ENCODE measurements at regions of chr12 and their contacts with region 1.

Region 1: DNA sequence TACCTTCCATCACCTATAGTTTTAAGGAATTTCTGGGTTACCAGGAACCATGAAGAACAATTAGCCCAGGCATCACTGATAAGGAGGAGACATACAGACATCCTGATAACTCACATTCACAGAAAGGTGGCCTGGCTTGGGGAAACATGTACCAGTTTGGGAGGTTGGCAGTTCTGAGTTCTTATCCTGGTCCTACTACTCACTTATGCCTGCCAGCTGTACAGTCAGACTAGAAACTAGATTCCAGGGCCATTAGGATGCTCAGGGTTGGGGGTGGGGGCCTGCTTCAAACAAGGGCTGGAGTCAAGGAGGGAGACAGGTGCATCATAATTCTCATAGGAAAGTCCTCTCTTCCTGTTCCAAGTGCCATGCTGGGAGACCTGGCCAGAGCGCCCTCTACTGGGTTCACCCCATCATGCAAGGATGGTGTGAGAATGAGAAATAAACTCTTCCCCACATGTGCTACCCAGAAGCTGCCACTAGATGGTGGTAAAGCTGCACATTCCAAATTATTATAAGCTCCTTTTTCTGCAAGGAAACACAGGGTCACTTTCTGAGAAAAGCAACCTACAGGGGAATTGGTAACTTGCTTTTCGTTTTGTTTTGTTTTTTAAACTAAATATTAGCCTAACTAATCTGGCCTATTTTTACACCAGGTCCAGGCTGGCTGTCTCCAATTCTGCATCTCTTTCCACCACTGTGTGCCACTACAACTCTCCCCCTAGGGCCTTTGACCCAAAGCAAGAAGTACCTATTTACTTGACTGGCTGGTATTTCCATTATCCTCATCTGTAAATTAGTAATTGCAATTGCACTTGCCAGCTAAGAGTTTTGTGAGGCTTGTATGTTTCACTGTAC is 14.5 kb downstream of the OAS2 start:
- DNase-seq: peak; percentile 70
- ATAC-seq: peak; percentile 45
- H3K4me3 Mint-ChIP-seq: no peak overlapping the region
- H3K27ac Mint-ChIP-seq: no peak overlapping the region
- H3K4me1 Mint-ChIP-seq: peaks cover 32% of the 10 kb centered on the region
- H3K27me3 Mint-ChIP-seq: no peaks in the 10 kb centered on the region

Region 2: GRCh38 chr12:112684742-112685141 is 308.0 kb before region 1 on chr12:
- CTCF ChIA-PET with region 1: no interaction called
- POLR2A ChIA-PET with region 1: no interaction called
- DNase-seq: no peak
- ATAC-seq: no peak
- H3K4me3 Mint-ChIP-seq: no peak overlapping the region
- H3K27ac Mint-ChIP-seq: no peak overlapping the region
- H3K4me1 Mint-ChIP-seq: no peaks in the 10 kb centered on the region
- H3K27me3 Mint-ChIP-seq: peaks cover 23% of the 10 kb centered on the region

Region 3: DNA sequence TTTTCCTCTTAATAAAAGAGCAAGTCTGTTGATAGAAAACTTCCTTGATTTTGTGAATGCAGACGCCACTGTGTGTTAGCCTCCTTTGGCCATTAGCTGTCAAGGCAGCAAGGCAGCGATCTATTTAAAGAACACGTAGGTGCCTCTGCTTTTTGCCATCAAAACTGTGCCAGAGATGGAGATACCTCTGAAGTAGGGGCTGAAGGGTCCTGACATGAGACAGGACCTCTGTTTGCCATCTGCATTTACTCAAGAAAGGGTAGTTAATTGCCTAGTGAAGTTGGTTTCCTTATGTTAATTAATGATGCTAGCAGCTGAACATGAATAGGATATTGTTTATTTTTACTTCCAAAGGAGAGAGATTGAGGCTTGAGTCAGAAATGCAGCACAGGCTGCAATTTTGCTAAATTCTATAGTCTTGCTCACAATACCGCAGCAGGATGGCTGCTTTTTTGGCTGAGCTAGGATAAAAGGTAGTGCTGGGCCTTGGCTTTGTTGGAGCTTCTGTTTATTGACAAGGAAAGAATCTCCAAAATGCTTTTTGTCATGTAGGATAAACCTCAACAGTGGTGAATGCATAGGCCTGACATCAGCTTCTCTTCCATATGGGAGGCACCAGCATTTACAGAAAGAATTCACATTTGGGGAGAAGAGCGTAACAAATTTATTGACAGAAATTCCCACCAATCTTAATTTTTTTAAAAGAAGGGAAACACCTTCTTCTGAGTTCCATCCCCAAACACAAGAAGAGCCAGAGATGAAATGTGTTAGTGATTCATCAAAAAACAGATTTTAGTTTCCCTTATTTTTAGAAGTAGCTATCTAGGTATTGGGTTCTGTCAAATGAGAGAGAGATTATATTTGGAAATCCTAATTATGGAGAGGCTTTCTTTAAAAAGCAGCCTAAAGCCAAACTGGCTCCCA is 215.1 kb before region 1 on chr12:
- CTCF ChIA-PET with region 1: no interaction called
- POLR2A ChIA-PET with region 1: no interaction called
- DNase-seq: no peak
- ATAC-seq: no peak
- H3K4me3 Mint-ChIP-seq: no peak overlapping the region
- H3K27ac Mint-ChIP-seq: no peak overlapping the region
- H3K4me1 Mint-ChIP-seq: no peaks in the 10 kb centered on the region
- H3K27me3 Mint-ChIP-seq: peaks cover 7% of the 10 kb centered on the region

Region 4: GRCh38 chr12:112900299-112901145 is 92.2 kb before region 1 on chr12:
- CTCF ChIA-PET with region 1: interaction called, 20 read pairs
- POLR2A ChIA-PET with region 1: no interaction called
- DNase-seq: peak; percentile 63
- ATAC-seq: peak; percentile 55
- H3K4me3 Mint-ChIP-seq: no peak overlapping the region
- H3K27ac Mint-ChIP-seq: no peak overlapping the region
- H3K4me1 Mint-ChIP-seq: peaks cover 37% of the 10 kb centered on the region
- H3K27me3 Mint-ChIP-seq: peaks cover 17% of the 10 kb centered on the region

Region 5: DNA sequence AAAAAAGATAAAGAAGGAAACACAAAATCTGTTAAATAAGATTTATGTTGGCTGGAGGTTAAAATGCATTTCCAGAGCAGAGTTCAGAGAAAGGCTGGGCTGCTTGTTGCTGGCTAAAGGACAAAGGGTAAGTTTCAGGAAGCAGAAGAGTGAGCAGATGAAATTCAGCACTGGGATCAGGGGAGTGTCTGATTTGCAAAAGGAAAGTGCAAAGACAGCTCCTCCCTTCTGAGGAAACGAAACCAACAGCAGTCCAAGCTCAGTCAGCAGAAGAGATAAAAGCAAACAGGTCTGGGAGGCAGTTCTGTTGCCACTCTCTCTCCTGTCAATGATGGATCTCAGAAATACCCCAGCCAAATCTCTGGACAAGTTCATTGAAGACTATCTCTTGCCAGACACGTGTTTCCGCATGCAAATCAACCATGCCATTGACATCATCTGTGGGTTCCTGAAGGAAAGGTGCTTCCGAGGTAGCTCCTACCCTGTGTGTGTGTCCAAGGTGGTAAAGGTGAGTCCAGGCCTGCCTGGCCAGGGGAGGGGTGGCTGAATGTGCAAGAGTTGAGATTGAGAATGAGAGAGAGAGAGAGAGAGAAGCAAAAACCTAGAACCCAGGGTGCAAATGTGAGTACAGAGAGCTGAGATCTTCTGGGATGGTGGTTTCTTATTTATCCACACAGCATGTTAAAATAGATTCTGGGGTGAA is 85.9 kb before region 1 on chr12 and contains the start of gene OAS1:
- CTCF ChIA-PET with region 1: interaction called, 20 read pairs
- POLR2A ChIA-PET with region 1: interaction called, 5 read pairs
- DNase-seq: peak; percentile 74
- ATAC-seq: peak; percentile 88
- H3K4me3 Mint-ChIP-seq: peak within 1 kb of the TSS; percentile 95
- H3K27ac Mint-ChIP-seq: peak within 1 kb of the TSS; percentile 95
- H3K4me1 Mint-ChIP-seq: peaks cover 68% of the 10 kb centered on the region
- H3K27me3 Mint-ChIP-seq: no peaks in the 10 kb centered on the region
- total RNA-seq, gene OAS1: 143 to 146 TPM

Region 6: DNA sequence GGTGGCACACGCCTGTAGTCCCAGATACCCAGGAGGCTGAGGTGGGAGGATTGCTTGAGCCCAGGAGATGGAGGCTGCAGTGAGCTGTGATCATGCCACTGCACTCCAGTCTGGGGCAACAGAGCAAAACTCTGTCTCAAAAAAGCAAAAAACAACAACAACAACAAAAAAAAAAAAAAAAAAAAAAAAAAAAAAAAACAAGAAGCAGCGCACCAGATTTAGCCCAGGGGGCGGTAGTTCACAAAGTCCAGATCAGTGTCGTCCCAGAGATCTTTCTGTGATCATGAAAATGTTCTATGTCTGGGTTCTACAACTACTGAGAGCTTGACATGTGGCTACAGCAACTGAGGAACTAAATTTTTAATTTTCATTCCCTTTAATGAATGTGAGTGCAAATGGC is 13.0 kb after region 1 on chr12:
- CTCF ChIA-PET with region 1: interaction called, 43 read pairs
- POLR2A ChIA-PET with region 1: no interaction called
- DNase-seq: no peak
- ATAC-seq: no peak
- H3K4me3 Mint-ChIP-seq: no peak overlapping the region
- H3K27ac Mint-ChIP-seq: no peak overlapping the region
- H3K4me1 Mint-ChIP-seq: no peaks in the 10 kb centered on the region
- H3K27me3 Mint-ChIP-seq: no peaks in the 10 kb centered on the region

Region 7: DNA sequence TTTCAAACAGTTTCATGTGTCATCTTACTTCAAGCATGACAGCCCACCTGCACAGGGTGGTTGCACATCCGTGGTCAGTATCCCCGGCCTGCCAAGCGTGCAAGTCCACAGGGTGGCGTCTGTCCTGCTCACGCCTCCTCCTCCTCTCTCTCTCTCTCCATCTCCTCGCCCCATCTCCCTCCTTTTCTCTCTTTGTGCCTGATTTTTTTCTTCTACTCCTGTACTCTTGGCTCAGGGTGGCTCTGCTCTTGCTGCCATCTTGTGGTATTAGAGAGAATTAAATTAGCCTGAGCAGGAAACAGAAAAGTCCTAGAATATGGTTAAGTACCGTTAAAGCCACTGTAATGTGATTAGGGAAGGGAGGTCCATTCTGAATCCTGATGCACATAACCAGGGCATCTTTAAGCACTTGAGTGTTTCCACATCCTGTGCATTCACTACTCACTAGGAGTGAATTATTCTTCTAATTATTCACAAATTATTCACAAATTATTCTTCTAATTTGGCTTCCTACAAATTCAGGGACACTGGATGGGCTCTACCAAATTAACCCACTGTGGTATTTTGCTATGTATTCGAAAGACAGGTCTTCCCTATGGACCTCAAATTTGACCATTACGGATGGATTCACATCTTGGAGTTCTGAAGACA is 38.2 kb after region 1 on chr12:
- CTCF ChIA-PET with region 1: interaction called, 10 read pairs
- POLR2A ChIA-PET with region 1: no interaction called
- DNase-seq: no peak
- ATAC-seq: no peak
- H3K4me3 Mint-ChIP-seq: no peak overlapping the region
- H3K27ac Mint-ChIP-seq: no peak overlapping the region
- H3K4me1 Mint-ChIP-seq: no peaks in the 10 kb centered on the region
- H3K27me3 Mint-ChIP-seq: peaks cover 11% of the 10 kb centered on the region

Region 8: GRCh38 chr12:113196996-113197395 is 204.2 kb after region 1 on chr12:
- CTCF ChIA-PET with region 1: no interaction called
- POLR2A ChIA-PET with region 1: no interaction called
- DNase-seq: peak; percentile 79
- ATAC-seq: peak; percentile 97
- H3K4me3 Mint-ChIP-seq: no peak overlapping the region
- H3K27ac Mint-ChIP-seq: no peak overlapping the region
- H3K4me1 Mint-ChIP-seq: peaks cover 10% of the 10 kb centered on the region
- H3K27me3 Mint-ChIP-seq: no peaks in the 10 kb centered on the region

Measured in activated CD8-positive, alpha-beta T cell treated with anti-CD3 and anti-CD28 coated beads, Interleukin-2, amount 10 ng/mL, durations not matched to agents 7 days and 5 days (primary cell).